ENCODE measurements at regions of chr2 and their contacts with region 1.

Region 1: DNA sequence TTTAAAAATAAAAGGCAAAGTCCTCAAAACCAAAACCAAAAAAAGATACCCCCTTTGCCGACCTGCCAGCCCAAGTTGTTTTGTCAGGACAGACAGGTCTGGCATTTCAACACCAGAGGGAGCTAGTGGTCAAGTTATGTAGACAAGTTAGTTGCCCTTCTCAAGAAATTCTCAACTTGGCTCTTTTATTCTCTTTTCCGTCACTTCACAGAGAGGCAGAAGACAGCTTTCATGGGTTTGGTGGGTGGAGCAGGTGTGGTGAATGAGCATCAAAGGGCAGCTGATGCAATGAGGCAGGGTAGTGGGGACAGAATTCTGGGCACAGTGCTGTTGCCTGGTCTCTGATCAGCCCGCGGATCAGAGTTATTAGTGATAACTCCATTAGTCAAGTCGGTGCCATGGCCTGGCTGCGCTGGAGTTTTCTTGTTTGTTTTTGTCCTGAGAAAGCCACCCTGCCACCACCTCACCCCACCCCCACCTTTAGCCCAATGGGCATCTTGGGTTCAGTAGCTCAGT is 303.7 kb upstream of the EPAS1 start:
- DNase-seq: peak; percentile 78
- ATAC-seq: peak; percentile 94
- H3K4me3 Mint-ChIP-seq: no peak overlapping the region
- H3K27ac Mint-ChIP-seq: peak overlapping the region; percentile 30
- H3K4me1 Mint-ChIP-seq: peaks cover 4% of the 10 kb centered on the region
- H3K27me3 Mint-ChIP-seq: no peaks in the 10 kb centered on the region
- CTCF ChIP-seq: peak; percentile 76

Region 2: DNA sequence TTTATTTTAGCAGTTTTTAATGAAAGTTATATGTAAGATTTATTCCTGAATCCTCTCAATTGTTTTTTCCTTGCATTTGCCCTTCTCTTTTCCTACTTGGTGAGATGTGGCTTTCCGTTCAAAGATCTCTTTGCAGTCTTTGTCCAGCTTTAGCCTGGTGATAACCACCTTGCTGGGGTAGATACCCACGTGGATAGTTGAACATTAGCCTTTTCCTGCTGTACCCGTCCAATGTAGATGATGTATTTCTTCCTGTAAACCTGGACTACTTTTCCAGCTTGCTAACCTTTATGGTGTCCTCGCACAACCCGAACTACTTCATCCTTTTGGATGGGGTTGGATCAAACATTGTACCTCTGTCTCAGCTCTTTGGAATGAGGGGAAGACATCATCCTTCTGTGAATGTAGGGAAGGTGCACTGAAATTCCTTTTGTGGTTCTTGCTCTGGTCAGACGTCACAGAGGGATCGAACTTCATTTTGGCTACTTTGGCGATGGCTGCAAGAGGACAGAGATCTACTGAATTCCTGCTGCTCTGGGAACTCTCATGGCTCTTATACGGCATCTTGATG is 10.5 kb after region 1 on chr2:
- CTCF ChIA-PET with region 1: interaction called, 17 read pairs
- POLR2A ChIA-PET with region 1: no interaction called
- intact Hi-C with region 1: no loop called
- DNase-seq: no peak
- ATAC-seq: no peak
- H3K4me3 Mint-ChIP-seq: no peak overlapping the region
- H3K27ac Mint-ChIP-seq: no peak overlapping the region
- H3K4me1 Mint-ChIP-seq: no peaks in the 10 kb centered on the region
- H3K27me3 Mint-ChIP-seq: no peaks in the 10 kb centered on the region
- CTCF ChIP-seq: no peak

Region 3: GRCh38 chr2:46364797-46365457 is 371.4 kb after region 1 on chr2:
- CTCF ChIA-PET with region 1: interaction called, 14 read pairs
- POLR2A ChIA-PET with region 1: no interaction called
- intact Hi-C with region 1: loop called (anchors 5 kb)
- DNase-seq: peak; percentile 52
- ATAC-seq: peak; percentile 57
- H3K4me3 Mint-ChIP-seq: no peak overlapping the region
- H3K27ac Mint-ChIP-seq: no peak overlapping the region
- H3K4me1 Mint-ChIP-seq: peaks cover 29% of the 10 kb centered on the region
- H3K27me3 Mint-ChIP-seq: no peaks in the 10 kb centered on the region
- CTCF ChIP-seq: peak; percentile 91

Region 4: DNA sequence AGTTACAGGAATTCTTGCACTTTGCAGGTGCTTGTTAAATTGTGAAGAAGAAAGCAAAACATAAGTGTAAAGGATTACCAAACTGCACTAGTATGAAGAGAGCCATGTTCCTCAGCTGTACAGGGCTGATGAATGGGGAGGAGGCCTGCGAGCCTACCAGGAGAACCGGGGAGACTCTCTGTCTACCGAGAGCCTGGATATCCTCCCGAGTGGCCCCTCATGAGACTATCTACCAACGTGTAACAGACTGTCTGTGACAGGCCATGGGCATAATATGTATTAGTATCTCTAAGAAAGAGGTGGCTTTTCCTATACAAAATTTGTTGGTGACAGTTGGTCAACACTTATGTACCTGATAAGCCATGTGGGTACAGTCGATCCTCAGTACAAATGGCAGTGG is 380.6 kb after region 1 on chr2:
- CTCF ChIA-PET with region 1: interaction called, 10 read pairs
- POLR2A ChIA-PET with region 1: no interaction called
- intact Hi-C with region 1: loop called (anchors 5 kb)
- DNase-seq: no peak
- ATAC-seq: no peak
- H3K4me3 Mint-ChIP-seq: no peak overlapping the region
- H3K27ac Mint-ChIP-seq: no peak overlapping the region
- H3K4me1 Mint-ChIP-seq: peaks cover 3% of the 10 kb centered on the region
- H3K27me3 Mint-ChIP-seq: no peaks in the 10 kb centered on the region
- CTCF ChIP-seq: no peak

Region 5: DNA sequence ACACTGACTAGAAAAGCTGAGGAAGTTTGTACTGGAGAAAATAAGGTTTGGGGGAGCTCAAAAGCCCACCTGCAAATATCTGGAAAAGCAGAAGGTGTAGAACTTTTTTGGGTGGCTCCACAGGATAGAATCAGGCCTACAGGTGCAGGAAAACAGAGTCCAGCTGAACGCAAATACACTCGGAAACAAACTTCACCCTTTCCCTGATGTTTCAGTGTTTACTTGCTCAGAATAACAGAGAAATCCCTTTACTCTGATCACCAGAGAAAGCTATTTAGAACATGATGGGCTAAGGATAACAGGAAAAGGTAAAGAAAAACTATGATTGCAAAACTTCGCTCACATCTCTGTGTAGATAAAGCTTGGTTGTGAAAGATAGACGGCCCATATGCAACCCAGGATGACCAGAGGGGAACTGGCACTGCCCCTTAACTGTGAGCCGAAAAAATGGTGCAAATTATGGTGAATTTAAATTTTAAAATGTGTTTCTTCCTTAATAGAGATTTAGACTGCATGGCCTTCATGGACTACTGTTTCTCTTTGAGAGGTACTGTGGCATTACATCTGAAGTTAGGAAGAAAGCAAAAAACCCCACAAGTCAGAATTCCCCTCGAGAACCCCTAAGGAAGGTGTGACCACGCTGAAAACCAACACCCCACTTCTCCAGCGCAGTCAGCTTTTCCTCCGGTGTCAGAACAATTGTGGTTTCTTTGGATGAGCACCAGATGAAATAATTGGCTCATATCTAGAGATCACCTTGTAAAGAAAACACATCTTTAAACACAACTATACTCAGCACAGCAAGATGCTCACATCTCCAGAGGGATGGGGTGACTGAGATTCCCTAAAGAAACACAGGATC is 401.3 kb after region 1 on chr2:
- CTCF ChIA-PET with region 1: no interaction called
- POLR2A ChIA-PET with region 1: no interaction called
- intact Hi-C with region 1: no loop called
- DNase-seq: peak; percentile 7
- ATAC-seq: no peak
- H3K4me3 Mint-ChIP-seq: no peak overlapping the region
- H3K27ac Mint-ChIP-seq: no peak overlapping the region
- H3K4me1 Mint-ChIP-seq: peaks cover 9% of the 10 kb centered on the region
- H3K27me3 Mint-ChIP-seq: no peaks in the 10 kb centered on the region
- CTCF ChIP-seq: no peak

Measured in activated CD8-positive, alpha-beta T cell treated with anti-CD3 and anti-CD28 coated beads for 36 hours (primary cell).